ENCODE measurements at regions of chr14 and their contacts with region 1.

Region 1: DNA sequence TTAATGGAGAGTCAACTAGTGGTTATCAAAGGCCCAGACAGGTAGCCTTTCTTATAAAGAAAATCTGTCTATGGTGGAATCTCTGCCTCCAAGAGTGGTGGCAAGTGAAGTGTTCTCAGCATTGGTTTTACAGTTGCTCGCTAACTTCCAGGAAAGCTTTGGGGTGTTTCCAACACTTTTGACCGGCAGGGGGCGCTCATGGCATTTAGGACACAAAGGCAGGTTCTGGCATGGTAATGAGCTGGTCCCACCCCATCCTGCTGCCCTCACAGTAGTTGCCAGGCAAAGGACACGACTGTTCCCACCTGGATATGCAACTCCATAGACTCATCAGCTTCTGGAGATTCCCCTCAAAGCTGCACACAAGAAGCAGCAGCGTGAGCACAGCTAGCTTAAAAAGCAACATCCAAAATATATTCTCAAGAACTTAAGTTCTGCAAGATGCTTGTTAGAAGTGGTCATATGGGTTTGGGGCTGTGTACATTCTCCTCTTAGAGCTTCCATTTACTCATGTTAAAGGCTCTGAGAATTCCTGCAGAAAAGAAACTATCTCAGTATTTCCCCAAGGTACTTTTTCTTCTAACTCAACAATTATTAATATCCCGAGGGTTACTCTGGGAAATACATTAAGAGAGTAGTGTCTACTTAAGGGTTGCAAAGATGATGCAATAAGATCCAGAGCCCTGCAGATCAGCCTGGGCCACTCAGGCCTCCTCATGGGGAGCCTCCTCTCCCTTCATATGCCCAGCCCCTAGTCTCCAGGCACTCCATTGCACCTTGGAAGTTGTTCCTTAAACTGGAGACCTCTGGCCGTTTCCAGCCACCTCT is 14.8 kb downstream of the PROX2 start:
- DNase-seq: peak; percentile 88
- ATAC-seq: peak; percentile 81
- H3K4me3 ChIP-seq: no peak overlapping the region
- H3K4me3 Mint-ChIP-seq: no peak overlapping the region
- H3K27ac ChIP-seq: no peak overlapping the region
- H3K27ac Mint-ChIP-seq: no peak overlapping the region
- H3K4me1 ChIP-seq: peaks cover 0 to 19% of the 10 kb centered on the region in 2 donors
- H3K4me1 Mint-ChIP-seq: peaks cover 9% of the 10 kb centered on the region
- H3K27me3 ChIP-seq: no peaks in the 10 kb centered on the region
- H3K27me3 Mint-ChIP-seq: no peaks in the 10 kb centered on the region
- CTCF ChIP-seq: peak; percentile 87

Region 2: GRCh38 chr14:74712499-74713394 is 148.4 kb before region 1 on chr14 and contains the starts of genes AREL1 and FCF1:
- CTCF ChIA-PET with region 1: no interaction called
- POLR2A ChIA-PET with region 1: no interaction called
- intact Hi-C with region 1: no loop called
- DNase-seq: peak; percentile 91
- ATAC-seq: peak; percentile 94
- H3K4me3 ChIP-seq: peak within 1 kb of the TSS; percentile 64 to 97 (median 87)
- H3K4me3 Mint-ChIP-seq: peak within 1 kb of the TSS; percentile 88
- H3K27ac ChIP-seq: peak within 1 kb of the TSS; percentile 83 to 90
- H3K27ac Mint-ChIP-seq: peak within 1 kb of the TSS; percentile 85
- H3K4me1 ChIP-seq: peaks cover 18 to 20% of the 10 kb centered on the region in 2 donors
- H3K4me1 Mint-ChIP-seq: peaks cover 38% of the 10 kb centered on the region
- H3K27me3 ChIP-seq: no peaks in the 10 kb centered on the region
- H3K27me3 Mint-ChIP-seq: no peaks in the 10 kb centered on the region
- CTCF ChIP-seq: no peak
- total RNA-seq, gene AREL1: 39.4 and 44.4 TPM in 2 replicates
- total RNA-seq, gene FCF1: 40.6 and 41.6 TPM in 2 replicates

Region 3: DNA sequence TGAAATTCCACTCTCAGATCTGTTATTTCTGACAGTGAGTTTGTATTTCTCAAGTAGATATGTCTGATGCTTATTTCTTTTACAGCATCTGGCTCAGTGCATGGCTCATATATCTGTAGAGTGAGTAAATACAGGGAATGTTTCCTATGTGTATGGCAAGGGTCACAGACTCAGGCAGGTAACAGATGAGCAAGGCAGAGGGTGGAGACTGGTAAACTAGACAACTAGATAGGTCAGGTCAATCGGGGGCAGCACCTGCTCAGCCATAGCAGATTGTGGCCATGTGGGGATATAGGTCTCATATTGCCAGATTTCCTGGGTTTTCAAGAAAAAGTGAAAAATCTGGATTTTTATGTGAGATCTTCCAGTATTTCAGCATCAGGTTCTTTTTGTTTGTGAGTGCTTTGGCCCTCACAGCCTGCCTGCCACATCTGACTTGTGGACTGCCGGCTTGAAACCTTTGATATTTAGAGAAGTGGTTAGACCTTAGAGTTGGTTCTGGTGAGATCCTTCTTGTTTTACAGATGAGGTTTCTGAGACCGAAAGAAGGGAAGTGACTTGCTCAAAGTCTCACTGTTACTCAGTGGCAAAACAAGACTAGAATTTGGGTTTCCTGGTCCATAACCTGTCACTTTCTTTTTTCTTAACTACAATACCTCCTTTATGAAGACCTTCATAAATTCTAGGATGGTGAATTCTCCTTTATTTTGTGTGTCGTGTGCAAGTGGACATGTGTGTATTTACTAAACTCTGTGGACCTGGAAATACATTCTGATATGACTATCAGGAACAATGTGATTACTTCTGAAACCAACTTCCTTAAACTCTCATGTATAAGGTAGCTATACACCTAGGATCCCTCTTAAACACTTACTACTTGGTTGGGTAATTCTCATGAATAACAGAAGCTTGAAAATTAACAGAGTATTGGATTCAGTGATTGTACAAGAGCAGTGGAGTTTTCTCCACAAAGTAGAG is 19.6 kb before region 1 on chr14:
- CTCF ChIA-PET with region 1: interaction called, 82 read pairs
- POLR2A ChIA-PET with region 1: no interaction called
- intact Hi-C with region 1: no loop called
- DNase-seq: peak; percentile 75
- ATAC-seq: peak; percentile 84
- H3K4me3 ChIP-seq: no peak overlapping the region
- H3K4me3 Mint-ChIP-seq: peak overlapping the region; percentile 65
- H3K27ac ChIP-seq: peak overlapping the region; percentile 70 to 77
- H3K27ac Mint-ChIP-seq: peak overlapping the region; percentile 80
- H3K4me1 ChIP-seq: peaks cover 46 to 47% of the 10 kb centered on the region in 2 donors
- H3K4me1 Mint-ChIP-seq: peaks cover 56% of the 10 kb centered on the region
- H3K27me3 ChIP-seq: no peaks in the 10 kb centered on the region
- H3K27me3 Mint-ChIP-seq: no peaks in the 10 kb centered on the region
- CTCF ChIP-seq: no peak

Region 4: GRCh38 chr14:74881431-74882361 is 20.6 kb after region 1 on chr14 and contains the start of gene DLST:
- CTCF ChIA-PET with region 1: interaction called, 193 read pairs
- POLR2A ChIA-PET with region 1: no interaction called
- intact Hi-C with region 1: no loop called
- DNase-seq: peak; percentile 93
- ATAC-seq: peak; percentile 83
- H3K4me3 ChIP-seq: peak within 1 kb of the TSS; percentile 76 to 94 (median 79)
- H3K4me3 Mint-ChIP-seq: peak within 1 kb of the TSS; percentile 100
- H3K27ac ChIP-seq: peak within 1 kb of the TSS; percentile 80 to 89
- H3K27ac Mint-ChIP-seq: peak within 1 kb of the TSS; percentile 99
- H3K4me1 ChIP-seq: peaks cover 29 to 33% of the 10 kb centered on the region in 2 donors
- H3K4me1 Mint-ChIP-seq: peaks cover 57% of the 10 kb centered on the region
- H3K27me3 ChIP-seq: no peaks in the 10 kb centered on the region
- H3K27me3 Mint-ChIP-seq: no peaks in the 10 kb centered on the region
- CTCF ChIP-seq: no peak
- total RNA-seq, gene DLST: 89.5 and 100 TPM in 2 replicates

Region 5: GRCh38 chr14:74945823-74946682 is 84.9 kb after region 1 on chr14:
- CTCF ChIA-PET with region 1: interaction called, 47 read pairs
- POLR2A ChIA-PET with region 1: no interaction called
- intact Hi-C with region 1: no loop called
- DNase-seq: peak; percentile 80
- ATAC-seq: peak; percentile 71
- H3K4me3 ChIP-seq: no peak overlapping the region
- H3K4me3 Mint-ChIP-seq: peak overlapping the region; percentile 32
- H3K27ac ChIP-seq: no peak overlapping the region
- H3K27ac Mint-ChIP-seq: peak overlapping the region; percentile 72
- H3K4me1 ChIP-seq: peaks cover 31 to 35% of the 10 kb centered on the region in 2 donors
- H3K4me1 Mint-ChIP-seq: peaks cover 34% of the 10 kb centered on the region
- H3K27me3 ChIP-seq: no peaks in the 10 kb centered on the region
- H3K27me3 Mint-ChIP-seq: no peaks in the 10 kb centered on the region
- CTCF ChIP-seq: peak; percentile 97

Measured in B cell (primary cell).